Activated B cell treated with CpG ODN at 0.5 μM for 24 hours (primary cell): ENCODE measurements at regions of chr3 and their contacts with region 1.

Region 1: GRCh38 chr3:105448338-105448982 is 81.8 kb downstream of the ALCAM start:
- DNase-seq: no peak
- ATAC-seq: no peak
- H3K4me3 Mint-ChIP-seq: no peak overlapping the region
- H3K27ac Mint-ChIP-seq: no peak overlapping the region
- H3K4me1 Mint-ChIP-seq: no peaks in the 10 kb centered on the region
- H3K27me3 Mint-ChIP-seq: no peaks in the 10 kb centered on the region
- CTCF ChIP-seq: no peak

Region 2: DNA sequence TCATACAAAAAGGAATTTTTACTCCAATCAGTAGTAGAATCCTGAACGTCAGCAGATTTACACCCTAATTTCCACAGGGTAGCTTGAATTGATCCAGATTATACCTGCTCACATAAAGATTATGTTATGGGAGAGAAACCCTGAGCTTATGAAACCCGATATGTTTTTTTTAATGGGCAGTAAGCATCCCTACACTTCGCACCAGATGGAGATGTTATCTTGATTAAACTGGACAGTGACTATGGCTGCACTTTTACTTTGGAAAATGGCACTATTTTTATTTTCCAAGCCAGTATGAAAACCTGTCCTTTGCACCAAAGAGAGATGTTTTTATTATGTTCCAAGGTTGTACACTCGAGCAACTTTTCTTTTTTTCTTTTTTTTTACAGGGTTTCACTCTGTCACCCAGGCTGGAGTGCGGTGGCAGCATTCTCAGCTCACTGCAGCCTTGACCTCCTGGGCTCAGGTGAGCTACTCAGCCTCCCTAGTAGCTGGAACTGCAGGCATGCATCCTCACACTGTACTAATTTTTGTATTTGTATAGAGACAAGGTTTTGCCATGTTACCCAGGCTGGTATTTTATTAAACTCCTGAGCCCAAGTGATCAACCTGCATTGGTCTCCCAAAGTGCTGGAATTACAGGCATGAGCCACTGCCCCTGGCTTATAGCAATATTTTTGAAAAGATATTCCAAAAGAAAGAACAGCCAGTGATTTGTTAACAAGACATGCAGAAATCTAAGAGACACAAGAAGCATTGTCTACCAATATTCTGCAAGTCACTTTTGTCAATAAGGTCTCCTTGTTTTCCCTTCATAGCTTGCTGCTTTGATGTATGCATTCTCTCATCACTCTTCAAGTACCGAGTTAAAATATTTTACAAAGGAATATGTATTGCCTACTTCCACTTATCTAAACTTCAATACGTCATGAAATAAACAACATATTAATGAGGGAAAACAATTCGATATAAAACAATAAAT is 1601.1 kb before region 1 on chr3:
- CTCF ChIA-PET with region 1: no interaction called
- POLR2A ChIA-PET with region 1: no interaction called
- intact Hi-C with region 1: no loop called
- DNase-seq: no peak
- ATAC-seq: no peak
- H3K4me3 Mint-ChIP-seq: no peak overlapping the region
- H3K27ac Mint-ChIP-seq: no peak overlapping the region
- H3K4me1 Mint-ChIP-seq: no peaks in the 10 kb centered on the region
- H3K27me3 Mint-ChIP-seq: no peaks in the 10 kb centered on the region
- CTCF ChIP-seq: no peak

Region 3: DNA sequence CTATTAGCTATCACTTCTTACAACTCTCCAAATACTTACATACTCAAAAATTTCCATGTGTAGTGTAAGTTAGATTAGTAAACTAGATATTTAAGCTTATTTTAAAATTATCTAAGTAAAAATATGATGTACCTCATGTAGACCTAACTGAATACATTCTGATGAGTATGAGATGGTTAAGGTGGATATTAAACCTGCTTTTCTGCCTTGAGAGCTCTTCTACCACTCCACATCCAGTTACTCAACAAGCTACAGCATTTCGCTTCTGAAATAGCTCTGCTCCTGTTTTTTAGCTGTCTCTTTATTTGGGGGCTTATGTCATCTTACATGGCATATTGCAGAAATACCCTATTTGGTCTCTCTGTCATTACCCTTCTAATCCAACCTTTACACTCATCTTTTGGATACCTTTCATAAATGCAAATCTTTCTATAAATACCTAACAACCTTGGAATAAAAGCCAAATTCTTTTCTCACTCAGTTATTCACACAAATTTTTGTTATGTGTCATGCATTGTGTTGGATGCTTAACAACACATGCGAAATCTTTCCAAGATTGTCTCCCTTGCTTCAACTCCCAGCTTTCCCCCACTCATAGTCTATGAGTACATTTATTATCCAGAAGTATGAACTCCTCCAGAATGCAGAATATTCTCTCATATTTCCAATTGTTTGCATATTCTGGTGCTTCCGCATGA is 10.2 kb after region 1 on chr3:
- CTCF ChIA-PET with region 1: no interaction called
- POLR2A ChIA-PET with region 1: no interaction called
- intact Hi-C with region 1: loop called (anchors 1 kb)
- DNase-seq: no peak
- ATAC-seq: no peak
- H3K4me3 Mint-ChIP-seq: no peak overlapping the region
- H3K27ac Mint-ChIP-seq: no peak overlapping the region
- H3K4me1 Mint-ChIP-seq: peaks cover 25% of the 10 kb centered on the region
- H3K27me3 Mint-ChIP-seq: no peaks in the 10 kb centered on the region
- CTCF ChIP-seq: no peak